ENCODE measurements at regions of chr16 and their contacts with region 1.

Region 1: DNA sequence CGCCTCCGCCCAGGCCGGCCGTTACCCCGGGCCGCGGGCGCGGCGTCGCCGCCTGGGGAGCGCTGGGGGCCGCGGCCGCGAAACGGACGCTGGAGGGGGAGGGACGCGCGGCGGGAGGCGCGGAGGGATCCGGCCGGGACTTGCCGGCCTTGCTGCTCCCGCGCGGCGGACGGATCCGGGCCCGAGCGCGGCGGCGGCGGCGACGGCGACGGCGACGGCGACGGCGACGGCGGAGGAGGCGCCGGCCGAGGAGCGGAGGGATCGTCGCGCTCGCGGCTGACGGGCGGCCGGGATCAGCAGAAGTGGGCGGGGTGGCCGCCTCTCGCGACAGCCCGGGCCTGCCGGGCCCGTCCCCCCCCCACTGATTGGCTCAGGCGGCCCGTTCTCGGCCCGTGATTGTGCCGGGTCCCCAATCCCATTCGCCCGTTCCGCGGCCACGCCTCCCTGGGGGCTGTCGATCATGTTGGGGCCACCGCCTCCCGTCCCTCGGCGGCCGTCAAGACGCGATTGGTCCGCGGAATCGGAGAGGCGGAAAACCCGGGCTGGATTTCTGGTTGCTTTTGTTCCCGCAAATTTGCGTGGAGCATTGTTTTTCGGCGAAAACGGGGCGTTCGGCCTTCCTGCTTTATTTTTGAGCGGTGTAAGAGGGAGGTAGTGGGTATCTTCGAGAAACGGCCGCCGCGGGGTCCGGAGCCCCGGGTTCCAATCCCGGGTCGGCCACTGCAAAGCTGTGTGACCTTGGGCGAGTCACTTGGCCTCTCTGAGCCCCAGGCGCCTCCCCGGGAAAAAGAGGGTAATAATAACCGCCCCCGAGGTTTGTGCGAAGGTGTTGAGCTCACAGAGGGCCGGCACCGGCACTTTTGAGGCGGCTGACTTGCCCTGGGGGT is at the start of gene ZCCHC14:
- DNase-seq: peak; percentile 98 to 99 (median 99)
- ATAC-seq: peak; percentile 91
- H3K4me3 ChIP-seq: peak within 1 kb of the TSS; percentile 61
- H3K4me3 Mint-ChIP-seq: peak within 1 kb of the TSS; percentile 94
- H3K27ac ChIP-seq: no peak within 1 kb of the TSS
- H3K27ac Mint-ChIP-seq: peak within 1 kb of the TSS; percentile 81
- H3K4me1 ChIP-seq: peaks cover 54% of the 10 kb centered on the region
- H3K4me1 Mint-ChIP-seq: peaks cover 47% of the 10 kb centered on the region
- H3K27me3 ChIP-seq: peaks cover 0 to 3% of the 10 kb centered on the region in 2 experiments
- H3K27me3 Mint-ChIP-seq: no peaks in the 10 kb centered on the region
- CTCF ChIP-seq: no peak
- total RNA-seq, gene ZCCHC14: 16.4 to 18.3 TPM

Region 2: DNA sequence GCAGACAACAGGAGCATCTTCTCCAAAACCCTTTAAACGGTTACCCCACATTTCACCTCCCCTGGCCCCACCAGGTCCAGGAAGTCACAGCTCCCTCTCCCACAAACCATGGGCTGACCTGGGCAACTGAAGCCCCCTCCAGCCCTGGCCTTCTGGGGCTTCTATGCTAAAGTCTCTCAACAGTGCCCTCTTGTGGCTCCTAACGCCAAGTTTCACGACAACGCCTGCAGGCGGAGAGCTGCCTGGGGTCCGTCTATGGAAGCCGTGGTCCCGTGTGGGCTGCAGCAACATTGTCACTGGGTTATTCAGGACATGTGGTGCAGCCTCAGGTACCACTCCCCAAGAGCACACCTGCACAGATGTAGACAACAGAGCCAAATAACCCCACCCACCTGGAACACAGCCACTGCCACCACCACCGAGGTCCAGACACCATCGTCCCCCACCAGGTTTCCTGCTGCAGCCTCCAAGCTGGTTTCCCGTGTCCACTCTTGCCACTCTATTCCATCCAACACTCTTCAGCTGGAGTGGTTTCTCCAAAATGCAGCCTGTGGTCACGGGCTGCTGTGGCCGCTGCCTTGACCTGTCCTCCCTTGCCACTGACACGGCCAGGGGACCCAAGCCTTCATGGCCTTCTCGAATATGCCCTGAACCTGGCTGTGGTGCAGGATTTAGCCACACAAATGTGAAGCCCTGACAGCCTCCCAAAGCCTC is 194.9 kb before region 1 on chr16:
- CTCF ChIA-PET with region 1: no interaction called
- POLR2A ChIA-PET with region 1: no interaction called
- intact Hi-C with region 1: no loop called
- DNase-seq: peak in 9 of 14 experiments; percentile 9 to 58 (median 27)
- ATAC-seq: no peak
- H3K4me3 ChIP-seq: no peak overlapping the region
- H3K4me3 Mint-ChIP-seq: no peak overlapping the region
- H3K27ac ChIP-seq: no peak overlapping the region
- H3K27ac Mint-ChIP-seq: no peak overlapping the region
- H3K4me1 ChIP-seq: peaks cover 3% of the 10 kb centered on the region
- H3K4me1 Mint-ChIP-seq: peaks cover 8% of the 10 kb centered on the region
- H3K27me3 ChIP-seq: no peaks in the 10 kb centered on the region
- H3K27me3 Mint-ChIP-seq: no peaks in the 10 kb centered on the region
- CTCF ChIP-seq: peak; percentile 59

Region 3: GRCh38 chr16:87387942-87388817 is 104.8 kb before region 1 on chr16:
- CTCF ChIA-PET with region 1: no interaction called
- POLR2A ChIA-PET with region 1: interaction called, 4 read pairs
- intact Hi-C with region 1: loop called (anchors 1 to 5 kb)
- DNase-seq: peak; percentile 74 to 97 (median 82)
- ATAC-seq: peak; percentile 71
- H3K4me3 ChIP-seq: peak overlapping the region; percentile 8
- H3K4me3 Mint-ChIP-seq: peak overlapping the region; percentile 79
- H3K27ac ChIP-seq: peak overlapping the region; percentile 70 to 82
- H3K27ac Mint-ChIP-seq: peak overlapping the region; percentile 98
- H3K4me1 ChIP-seq: peaks cover 49% of the 10 kb centered on the region
- H3K4me1 Mint-ChIP-seq: peaks cover 49% of the 10 kb centered on the region
- H3K27me3 ChIP-seq: no peaks in the 10 kb centered on the region
- H3K27me3 Mint-ChIP-seq: peaks cover 4% of the 10 kb centered on the region
- CTCF ChIP-seq: no peak

Region 4: DNA sequence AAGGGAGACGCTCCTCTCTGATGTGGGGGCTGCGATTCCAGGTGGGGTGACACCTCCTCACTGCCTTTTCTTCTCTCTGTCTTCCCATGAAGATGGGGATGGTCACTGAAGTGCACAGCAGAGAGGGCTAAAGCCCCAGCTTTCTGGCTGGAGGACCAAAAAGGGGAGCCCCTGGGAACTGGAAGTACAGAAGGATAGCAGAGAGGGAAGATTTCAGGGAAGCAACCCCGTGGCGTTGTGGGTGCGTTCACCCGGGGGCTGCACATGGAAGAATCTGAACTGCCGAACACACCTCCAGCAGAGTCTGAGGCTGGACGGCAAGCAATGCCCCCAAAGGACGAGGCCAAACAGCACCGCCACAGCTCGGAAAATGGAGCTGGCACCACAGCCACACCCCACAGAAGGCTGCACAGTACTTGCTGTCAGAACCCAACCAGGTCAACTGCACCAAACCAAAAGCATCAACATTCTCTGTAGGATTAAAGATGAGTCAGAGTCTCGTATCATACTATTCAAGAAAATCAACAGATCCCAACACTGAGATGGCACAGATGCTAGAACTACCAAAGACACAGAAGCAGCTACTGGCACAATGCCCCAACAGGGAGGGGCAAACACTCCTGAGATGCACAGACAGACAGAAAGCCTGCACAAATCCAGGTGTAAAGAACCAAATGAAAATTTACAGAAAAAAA is 50.9 kb before region 1 on chr16:
- CTCF ChIA-PET with region 1: no interaction called
- POLR2A ChIA-PET with region 1: no interaction called
- intact Hi-C with region 1: loop called in 1 of 2 experiments (anchors 1 kb)
- DNase-seq: no peak
- ATAC-seq: no peak
- H3K4me3 ChIP-seq: no peak overlapping the region
- H3K4me3 Mint-ChIP-seq: no peak overlapping the region
- H3K27ac ChIP-seq: no peak overlapping the region
- H3K27ac Mint-ChIP-seq: no peak overlapping the region
- H3K4me1 ChIP-seq: peaks cover 1% of the 10 kb centered on the region
- H3K4me1 Mint-ChIP-seq: peaks cover 4% of the 10 kb centered on the region
- H3K27me3 ChIP-seq: no peaks in the 10 kb centered on the region
- H3K27me3 Mint-ChIP-seq: no peaks in the 10 kb centered on the region
- CTCF ChIP-seq: no peak

Region 5: GRCh38 chr16:87461466-87461991 is 31.4 kb before region 1 on chr16:
- CTCF ChIA-PET with region 1: no interaction called
- POLR2A ChIA-PET with region 1: interaction called, 18 read pairs
- intact Hi-C with region 1: loop called in 1 of 2 experiments (anchors 2 kb)
- DNase-seq: peak in 5 of 14 experiments; percentile 9 to 60 (median 36)
- ATAC-seq: no peak
- H3K4me3 ChIP-seq: no peak overlapping the region
- H3K4me3 Mint-ChIP-seq: no peak overlapping the region
- H3K27ac ChIP-seq: no peak overlapping the region
- H3K27ac Mint-ChIP-seq: peak overlapping the region; percentile 54
- H3K4me1 ChIP-seq: peaks cover 49% of the 10 kb centered on the region
- H3K4me1 Mint-ChIP-seq: peaks cover 49% of the 10 kb centered on the region
- H3K27me3 ChIP-seq: no peaks in the 10 kb centered on the region
- H3K27me3 Mint-ChIP-seq: no peaks in the 10 kb centered on the region
- CTCF ChIP-seq: no peak